ENCODE measurements at regions of chr2 and their contacts with region 1.

Region 1: DNA sequence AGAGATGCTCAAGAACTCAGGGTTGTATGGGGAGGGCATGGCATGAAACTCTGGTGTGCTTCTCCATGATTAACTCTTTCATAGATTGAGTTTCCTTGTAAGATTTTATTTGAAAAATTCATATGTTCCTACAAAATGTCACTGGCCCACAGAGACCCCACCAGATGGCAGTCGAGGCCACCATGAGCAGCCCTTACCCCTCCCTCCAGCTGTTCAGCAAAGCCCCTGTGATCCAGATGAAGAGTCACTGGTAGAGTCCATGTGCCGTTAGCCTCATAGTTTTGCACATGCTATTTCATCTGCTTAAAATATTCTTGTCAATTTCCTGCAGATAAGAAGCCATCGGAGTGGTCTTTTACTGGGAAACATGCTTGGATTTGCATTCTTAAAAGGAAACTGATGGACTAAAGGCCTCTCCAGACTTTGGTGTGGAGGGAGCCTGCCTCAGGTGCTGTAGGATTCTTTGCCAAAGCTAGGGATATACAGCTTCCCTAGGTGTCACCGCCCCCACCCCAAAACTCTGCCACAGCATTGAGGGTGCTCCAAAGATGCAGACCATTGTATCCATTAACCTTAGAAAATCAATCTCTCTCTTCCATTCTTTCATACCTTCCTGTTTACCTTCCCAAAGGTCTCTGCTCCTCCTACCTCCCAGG is 18.8 kb downstream of the ZNF385B start:
- DNase-seq: peak; percentile 38
- ATAC-seq: no peak

Region 2: GRCh38 chr2:179796213-179797007 is 46.2 kb before region 1 on chr2:
- intact Hi-C with region 1: no loop called
- DNase-seq: no peak
- ATAC-seq: no peak

Region 3: GRCh38 chr2:179963626-179964025 is 121.0 kb after region 1 on chr2:
- intact Hi-C with region 1: no loop called
- DNase-seq: no peak
- ATAC-seq: no peak

Region 4: GRCh38 chr2:180077295-180077906 is 234.8 kb after region 1 on chr2:
- intact Hi-C with region 1: loop called (anchors 5 kb)
- DNase-seq: no peak
- ATAC-seq: no peak